HEK293T (cell line): ENCODE measurements at regions of chr20 and their contacts with region 1.

Region 1: DNA sequence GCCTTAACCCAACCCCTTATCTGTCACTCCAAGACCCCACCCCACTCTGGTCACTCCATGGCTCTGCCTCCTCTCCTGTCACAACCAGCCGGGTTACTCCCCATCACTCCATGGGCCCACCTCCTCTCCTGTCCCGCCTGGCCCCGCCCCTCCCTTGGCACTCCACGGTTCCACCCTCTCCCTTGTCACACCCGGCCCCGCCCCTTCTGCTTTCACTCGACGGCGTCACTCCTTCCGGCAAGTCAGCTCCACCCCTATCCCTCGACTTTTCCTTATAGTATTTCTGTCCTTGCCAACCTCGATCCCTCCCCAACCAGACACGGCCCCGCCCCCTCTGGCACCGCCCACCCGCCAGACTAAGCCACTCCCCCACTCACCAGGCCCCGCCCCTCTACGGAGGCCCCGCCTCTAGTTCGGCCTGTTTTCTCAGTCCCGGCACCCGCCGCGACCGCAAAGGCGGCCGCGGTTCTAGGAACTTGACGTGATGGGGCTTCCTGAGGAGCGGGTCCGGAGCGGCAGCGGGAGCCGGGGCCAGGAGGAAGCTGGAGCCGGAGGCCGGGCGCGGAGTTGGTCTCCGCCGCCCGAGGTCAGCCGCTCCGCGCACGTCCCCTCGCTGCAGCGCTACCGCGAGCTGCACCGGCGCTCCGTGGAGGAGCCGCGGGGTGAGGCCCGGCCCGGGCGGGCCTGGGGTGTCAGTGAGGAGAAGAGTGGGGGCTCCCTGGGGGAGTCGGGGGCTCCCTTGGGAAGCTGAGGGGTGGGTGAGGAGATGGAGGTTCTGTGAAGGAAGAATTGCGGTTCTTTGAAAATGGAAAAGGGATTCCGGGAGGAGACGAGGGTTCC is at the start of gene ACSS2:
- DNase-seq: peak; percentile 96

Region 2: DNA sequence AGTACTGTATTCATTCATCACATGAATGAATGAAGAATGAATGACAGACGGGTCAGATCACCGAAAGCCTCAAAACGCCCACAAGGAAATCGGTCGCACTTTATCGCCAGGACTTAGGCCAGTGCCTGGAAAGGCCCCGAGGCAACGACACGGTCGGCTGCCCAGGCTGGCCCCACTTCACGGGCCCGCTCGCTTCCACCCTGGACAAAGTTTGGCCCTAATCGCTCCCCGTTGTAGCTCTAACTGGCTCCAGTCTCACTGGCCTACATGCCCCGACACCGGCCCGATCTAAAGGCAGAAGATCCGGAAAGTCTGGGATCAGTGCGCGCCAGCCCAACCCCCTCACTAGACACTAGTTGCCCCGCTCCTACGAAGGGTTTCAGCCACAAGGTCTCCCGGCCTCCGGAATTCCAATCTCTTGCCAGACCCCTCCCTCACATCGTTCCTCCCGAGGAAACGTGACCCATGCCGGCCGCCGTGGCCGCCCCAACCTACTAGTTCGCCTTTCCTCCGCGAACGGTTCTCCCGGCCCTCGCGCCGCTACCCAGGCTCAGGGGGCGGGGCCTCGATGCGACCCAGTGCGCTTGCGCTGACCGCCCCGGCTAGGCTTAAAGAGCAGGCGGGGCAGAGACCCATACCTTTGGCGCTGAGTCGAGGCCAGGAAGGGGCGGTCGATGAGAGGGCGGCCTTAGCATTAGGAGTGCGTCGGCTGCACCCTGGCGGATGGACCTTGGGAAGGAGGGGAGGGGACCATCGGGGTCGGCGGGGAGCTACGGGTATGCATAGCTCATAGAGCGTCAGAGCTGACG is 79.1 kb after region 1 on chr20 and contains the starts of genes GSS and MYH7B:
- CTCF ChIA-PET with region 1: interaction called, 4 read pairs
- POLR2A ChIA-PET with region 1: interaction called, 16 read pairs
- DNase-seq: peak; percentile 97